ENCODE measurements at regions of chr19 and their contacts with region 1.

Region 1: DNA sequence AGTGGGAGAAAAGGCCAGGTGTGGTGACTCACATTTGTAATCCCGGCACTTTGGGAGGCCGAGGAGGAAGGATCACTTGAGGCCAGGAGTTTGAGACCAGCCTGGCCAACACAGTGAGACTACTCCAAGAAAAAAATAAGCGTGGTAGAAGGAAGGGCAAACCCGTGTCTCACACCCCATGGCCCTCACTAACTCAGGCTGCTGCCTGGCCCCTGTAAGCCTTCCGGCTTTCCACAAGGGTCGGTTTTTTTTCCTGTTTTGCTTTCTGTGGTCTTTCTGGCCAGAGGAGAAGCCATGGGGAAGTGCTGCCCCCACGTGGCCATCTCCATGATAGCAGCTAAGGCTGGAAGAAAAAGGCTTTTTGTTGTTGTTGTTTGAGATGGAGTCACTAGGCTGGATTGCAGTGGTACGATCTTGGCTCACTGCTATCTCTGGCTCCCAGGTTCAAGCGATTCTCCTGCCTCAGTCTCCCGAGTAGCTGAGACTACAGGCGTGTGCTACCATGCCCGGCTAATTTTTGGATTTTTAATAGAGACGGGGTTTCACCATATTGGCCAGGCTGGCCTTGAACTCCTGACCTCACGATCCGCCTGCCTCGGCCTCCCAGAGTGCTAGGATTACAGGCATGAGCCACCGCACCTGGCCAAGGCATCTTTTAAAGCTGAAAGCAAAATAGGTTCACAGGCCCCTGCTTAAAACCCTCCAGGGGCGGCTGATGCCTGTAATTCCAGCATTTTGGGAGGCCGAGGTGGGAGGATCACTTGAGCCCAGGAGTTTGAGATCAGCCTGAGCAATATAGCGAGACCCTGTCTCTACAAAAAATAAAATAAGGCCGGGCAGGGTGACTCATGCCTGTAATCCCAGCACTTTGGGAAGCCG is 7.5 kb upstream of the ARHGEF18 start:
- DNase-seq: peak; percentile 63 to 85 (median 78)
- H3K4me3 ChIP-seq: no peak overlapping the region
- H3K4me3 Mint-ChIP-seq: peak overlapping the region; percentile 17 to 64 (median 41)
- H3K27ac ChIP-seq: no peak overlapping the region
- H3K27ac Mint-ChIP-seq: peak overlapping the region; percentile 61 to 94 (median 77)
- H3K4me1 ChIP-seq: peaks cover 63% of the 10 kb centered on the region
- H3K4me1 Mint-ChIP-seq: peaks cover 45 to 68% (median 57%) of the 10 kb centered on the region in 3 donors
- H3K27me3 ChIP-seq: no peaks in the 10 kb centered on the region
- H3K27me3 Mint-ChIP-seq: no peaks in the 10 kb centered on the region

Region 2: DNA sequence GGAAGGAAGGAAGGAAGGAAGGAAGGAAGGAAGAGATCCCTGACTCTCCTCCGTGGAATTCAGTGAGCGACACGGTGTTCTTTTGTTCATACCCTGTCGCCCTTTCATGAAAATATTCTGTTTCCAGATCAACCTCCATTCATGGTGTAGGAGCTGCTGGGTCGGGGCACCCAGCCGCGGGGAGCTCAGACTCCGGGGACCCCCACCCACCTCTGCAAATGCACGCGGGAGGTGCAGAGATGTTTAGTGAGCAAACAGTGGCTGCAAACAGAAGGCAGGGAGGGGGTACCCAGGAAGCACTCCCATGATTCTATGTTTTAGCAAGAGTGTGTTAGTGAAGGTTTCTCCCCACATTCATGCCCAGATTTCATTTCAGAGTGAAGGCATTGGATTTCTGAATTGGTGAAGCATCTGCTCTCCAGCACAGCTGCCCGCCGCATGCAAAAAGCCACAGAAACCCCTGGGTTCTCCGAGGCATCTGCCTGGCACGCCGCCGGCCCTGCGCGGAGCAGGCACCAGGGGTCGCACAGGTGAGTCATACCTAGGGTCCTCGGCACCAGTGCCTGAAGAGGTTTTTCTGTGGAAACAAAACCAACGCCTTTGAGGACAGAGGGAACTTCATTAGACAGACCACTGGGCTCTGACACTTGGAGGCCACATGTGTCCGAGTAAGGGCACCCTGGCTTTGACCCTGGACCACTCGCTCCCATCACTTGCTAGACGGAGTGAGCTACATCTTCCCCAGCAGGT is 191.1 kb before region 1 on chr19:
- CTCF ChIA-PET with region 1: interaction called, 21 read pairs
- POLR2A ChIA-PET with region 1: no interaction called
- DNase-seq: no peak
- H3K4me3 ChIP-seq: no peak overlapping the region
- H3K4me3 Mint-ChIP-seq: no peak overlapping the region
- H3K27ac ChIP-seq: no peak overlapping the region
- H3K27ac Mint-ChIP-seq: no peak overlapping the region
- H3K4me1 ChIP-seq: no peaks in the 10 kb centered on the region
- H3K4me1 Mint-ChIP-seq: peaks cover 0 to 4% (median 0%) of the 10 kb centered on the region in 3 donors
- H3K27me3 ChIP-seq: no peaks in the 10 kb centered on the region
- H3K27me3 Mint-ChIP-seq: peaks cover 4 to 5% of the 10 kb centered on the region in 2 donors

Region 3: GRCh38 chr19:7293795-7294570 is 47.2 kb before region 1 on chr19 and contains the start of gene INSR:
- CTCF ChIA-PET with region 1: no interaction called
- POLR2A ChIA-PET with region 1: no interaction called
- DNase-seq: peak in 1 of 5 donors; percentile 21
- H3K4me3 ChIP-seq: peak within 1 kb of the TSS; percentile 15
- H3K4me3 Mint-ChIP-seq: peak within 1 kb of the TSS; percentile 50 to 60 (median 55)
- H3K27ac ChIP-seq: no peak within 1 kb of the TSS
- H3K27ac Mint-ChIP-seq: no peak within 1 kb of the TSS
- H3K4me1 ChIP-seq: peaks cover 8% of the 10 kb centered on the region
- H3K4me1 Mint-ChIP-seq: peaks cover 5 to 17% (median 9%) of the 10 kb centered on the region in 3 donors
- H3K27me3 ChIP-seq: peaks cover 6% of the 10 kb centered on the region
- H3K27me3 Mint-ChIP-seq: peaks cover 41 to 59% of the 10 kb centered on the region in 2 donors
- total RNA-seq, gene INSR: 1.2 TPM

Region 4: DNA sequence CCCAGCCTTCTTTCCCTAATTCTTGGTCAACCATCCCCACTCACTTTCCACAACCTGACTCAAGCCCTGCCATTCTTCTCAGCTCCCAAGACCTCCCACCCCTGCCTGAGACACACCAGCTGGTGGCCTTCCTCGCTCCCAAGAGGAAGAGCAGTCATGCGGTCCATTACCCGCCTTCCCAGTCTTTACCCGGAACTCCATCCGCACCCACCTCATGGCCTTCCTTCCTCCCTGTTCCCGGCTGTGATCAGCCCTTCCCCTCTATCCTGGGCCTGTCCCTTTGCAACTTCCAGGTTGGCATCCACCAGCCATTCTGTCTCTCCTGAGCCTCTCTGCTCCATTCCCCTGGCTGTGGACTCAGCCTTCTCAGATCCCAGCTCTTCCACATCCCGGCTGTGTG is 28.4 kb before region 1 on chr19:
- CTCF ChIA-PET with region 1: no interaction called
- POLR2A ChIA-PET with region 1: no interaction called
- DNase-seq: no peak
- H3K4me3 ChIP-seq: no peak overlapping the region
- H3K4me3 Mint-ChIP-seq: no peak overlapping the region
- H3K27ac ChIP-seq: no peak overlapping the region
- H3K27ac Mint-ChIP-seq: no peak overlapping the region
- H3K4me1 ChIP-seq: no peaks in the 10 kb centered on the region
- H3K4me1 Mint-ChIP-seq: no peaks in the 10 kb centered on the region
- H3K27me3 ChIP-seq: no peaks in the 10 kb centered on the region
- H3K27me3 Mint-ChIP-seq: peaks cover 0 to 4% of the 10 kb centered on the region in 2 donors

Region 5: DNA sequence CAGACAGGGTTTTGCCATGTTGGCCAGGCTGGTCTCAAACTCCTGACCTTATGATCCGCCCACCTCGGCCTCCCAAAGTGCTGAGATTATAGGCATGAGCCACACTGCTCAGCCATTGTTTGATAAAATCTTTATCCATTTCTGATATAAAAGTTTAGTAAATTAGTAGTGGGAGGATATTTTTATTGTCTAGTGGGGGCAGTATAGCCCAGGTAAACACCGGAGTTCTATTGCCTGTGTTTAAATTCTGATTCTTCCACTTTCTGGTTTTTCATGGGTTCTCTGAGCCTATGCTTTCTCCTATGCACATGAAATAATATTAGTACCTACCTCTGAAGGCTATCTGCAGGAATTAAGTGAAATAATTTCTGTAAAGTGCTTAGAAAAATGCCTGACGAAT is 12.6 kb before region 1 on chr19:
- CTCF ChIA-PET with region 1: interaction called, 24 read pairs
- POLR2A ChIA-PET with region 1: no interaction called
- DNase-seq: no peak
- H3K4me3 ChIP-seq: no peak overlapping the region
- H3K4me3 Mint-ChIP-seq: no peak overlapping the region
- H3K27ac ChIP-seq: no peak overlapping the region
- H3K27ac Mint-ChIP-seq: no peak overlapping the region
- H3K4me1 ChIP-seq: no peaks in the 10 kb centered on the region
- H3K4me1 Mint-ChIP-seq: no peaks in the 10 kb centered on the region
- H3K27me3 ChIP-seq: no peaks in the 10 kb centered on the region
- H3K27me3 Mint-ChIP-seq: peaks cover 2 to 9% of the 10 kb centered on the region in 2 donors

Measured in CD8-positive, alpha-beta memory T cell (primary cell).